ENCODE measurements at regions of chr6 and their contacts with region 1.

Region 1: GRCh38 chr6:2952557-2953095 is 18.7 kb downstream of the SERPINB6 start:
- DNase-seq: peak; percentile 41
- ATAC-seq: peak; percentile 95
- H3K4me3 Mint-ChIP-seq: peak overlapping the region; percentile 75
- H3K27ac Mint-ChIP-seq: peak overlapping the region; percentile 79
- H3K4me1 Mint-ChIP-seq: peaks cover 17% of the 10 kb centered on the region
- H3K27me3 Mint-ChIP-seq: no peaks in the 10 kb centered on the region
- CTCF ChIP-seq: no peak

Region 2: DNA sequence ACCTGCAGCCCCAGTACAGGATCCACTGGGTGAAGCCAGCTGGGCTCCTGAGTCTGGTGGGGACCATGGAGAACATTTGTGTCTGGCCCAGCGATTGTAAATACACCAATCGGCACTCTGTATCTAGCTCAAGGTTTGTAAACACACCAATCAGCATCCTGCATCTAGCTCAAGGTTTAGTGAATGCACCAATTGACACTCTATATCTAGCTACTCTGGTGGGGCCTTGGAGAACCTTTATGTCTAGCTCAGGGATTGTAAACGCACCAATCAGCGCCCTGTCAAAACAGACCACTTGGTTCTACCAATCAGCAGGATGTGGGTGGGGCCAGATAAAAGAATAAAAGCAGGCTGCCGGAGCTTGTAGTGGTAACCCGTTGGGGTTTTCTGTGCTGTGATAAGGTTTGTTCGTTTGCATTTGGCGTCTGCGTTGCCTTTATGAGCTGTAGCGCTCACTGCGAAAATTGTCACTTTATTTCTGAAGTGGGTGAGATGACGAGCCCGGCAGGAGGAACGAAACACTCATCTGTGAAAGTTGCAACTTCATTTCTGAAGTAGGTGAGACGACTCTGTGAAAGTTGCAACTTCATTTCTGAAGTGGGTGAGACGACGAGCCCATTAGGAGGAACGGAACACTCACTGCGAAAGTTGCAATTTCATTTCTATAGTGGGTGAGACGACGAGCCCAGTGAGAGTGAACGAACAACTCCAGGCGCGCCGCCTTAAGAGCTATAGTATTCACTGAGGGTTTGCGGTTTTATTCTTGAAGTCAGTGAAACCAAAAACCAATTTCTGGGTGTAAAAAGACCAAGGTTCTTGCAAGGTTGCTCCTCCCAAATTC is 12.4 kb before region 1 on chr6:
- CTCF ChIA-PET with region 1: interaction called, 13 read pairs
- POLR2A ChIA-PET with region 1: interaction called, 24 read pairs
- intact Hi-C with region 1: loop called (anchors 1 kb)
- DNase-seq: peak; percentile 39
- ATAC-seq: peak; percentile 81
- H3K4me3 Mint-ChIP-seq: peak overlapping the region; percentile 82
- H3K27ac Mint-ChIP-seq: peak overlapping the region; percentile 94
- H3K4me1 Mint-ChIP-seq: peaks cover 69% of the 10 kb centered on the region
- H3K27me3 Mint-ChIP-seq: no peaks in the 10 kb centered on the region
- CTCF ChIP-seq: no peak

Measured in activated B cell treated with CpG ODN at 0.5 μM for 24 hours (primary cell).